Left cardiac atrium (tissue), 4 donors: ENCODE measurements at regions of chr9 and their contacts with region 1.

Region 1: GRCh38 chr9:68779558-68780384 is 74.7 kb downstream of the PIP5K1B start:
- DNase-seq: peak; percentile 96
- ATAC-seq: peak; percentile 96

Region 2: GRCh38 chr9:68717552-68718443 is 62.0 kb before region 1 on chr9:
- intact Hi-C with region 1: no loop called
- DNase-seq: no peak
- ATAC-seq: no peak

Region 3: DNA sequence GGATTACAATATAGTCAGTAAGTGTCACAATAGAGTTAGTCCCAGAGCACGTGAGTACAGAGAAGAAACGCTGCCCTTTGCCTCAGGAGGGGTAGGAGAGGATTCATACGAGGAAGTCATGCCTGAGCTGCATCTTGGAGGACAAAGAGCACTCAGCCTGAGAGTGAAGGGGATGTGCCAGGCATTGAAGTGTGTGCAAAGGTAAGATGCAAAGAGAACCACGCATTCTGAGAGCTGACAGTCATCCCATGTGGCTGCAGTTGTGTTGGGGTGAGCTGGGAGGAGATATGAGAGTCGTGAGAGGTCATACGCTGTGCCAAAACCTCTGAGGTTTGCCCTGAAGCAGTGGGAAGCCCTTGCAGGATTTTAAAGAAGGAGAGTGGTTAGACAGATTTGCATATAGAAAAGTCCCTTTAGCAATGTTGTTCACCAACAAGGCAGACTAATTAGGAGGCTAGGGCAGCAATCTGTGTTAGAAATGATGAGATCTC is 22.8 kb after region 1 on chr9:
- intact Hi-C with region 1: no loop called
- DNase-seq: no peak
- ATAC-seq: no peak

Region 4: DNA sequence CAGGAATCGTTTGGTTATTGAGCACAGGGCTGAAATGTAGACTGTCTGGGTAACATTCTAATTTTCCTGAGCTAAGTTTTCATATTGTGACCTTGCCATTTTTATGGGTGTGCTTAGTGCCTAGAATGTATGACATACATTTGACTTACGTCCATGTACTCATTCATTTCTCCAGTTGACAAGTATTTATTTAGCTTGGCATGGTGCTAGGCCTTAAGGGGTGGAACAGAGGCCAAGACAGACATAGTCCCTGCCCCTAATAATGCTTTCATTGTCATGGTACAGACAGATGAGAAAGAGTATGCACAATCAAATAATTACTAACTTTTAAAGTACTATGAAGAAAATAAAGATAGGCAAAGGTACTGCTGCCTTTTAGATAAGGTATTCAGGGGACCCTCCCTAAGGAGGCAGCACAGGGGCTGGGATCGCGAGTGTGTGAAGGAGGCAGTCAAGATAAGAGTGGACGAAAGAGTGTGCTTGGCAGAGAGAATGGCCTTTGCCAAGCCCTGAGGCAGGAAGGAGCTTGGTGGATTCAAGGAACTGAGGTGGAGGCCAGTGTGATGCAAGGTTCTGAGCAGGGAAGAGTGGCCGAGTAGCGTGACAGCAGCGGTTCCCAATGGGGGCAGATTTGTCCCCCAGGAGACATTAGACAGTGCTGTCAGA is 53.2 kb after region 1 on chr9:
- intact Hi-C with region 1: loop called in 1 of 2 experiments (anchors 5 kb)
- DNase-seq: no peak
- ATAC-seq: peak in 1 of 2 donors; percentile 30